Vagina (tissue), 2 donors: ENCODE measurements at regions of chr20 and their contacts with region 1.

Region 1: GRCh38 chr20:17682103-17682888 is at the start of gene RRBP1:
- DNase-seq: peak; percentile 98 to 99
- H3K4me3 ChIP-seq: peak within 1 kb of the TSS; percentile 73 to 96
- H3K27ac ChIP-seq: peak within 1 kb of the TSS; percentile 95
- H3K4me1 ChIP-seq: peaks cover 31% of the 10 kb centered on the region
- H3K27me3 ChIP-seq: no peaks in the 10 kb centered on the region
- CTCF ChIP-seq: peak; percentile 7 to 57 (median 30)
- POLR2A ChIP-seq: peak in 1 of 2 donors; percentile 92
- total RNA-seq, gene RRBP1: 79.8 TPM

Region 2: GRCh38 chr20:17536944-17537444 is 145.3 kb before region 1 on chr20:
- intact Hi-C with region 1: loop called (anchors 10 kb)
- DNase-seq: no peak
- H3K4me3 ChIP-seq: no peak overlapping the region
- H3K27ac ChIP-seq: no peak overlapping the region
- H3K4me1 ChIP-seq: peaks cover 15% of the 10 kb centered on the region
- H3K27me3 ChIP-seq: no peaks in the 10 kb centered on the region
- CTCF ChIP-seq: peak; percentile 52 to 98 (median 85)
- POLR2A ChIP-seq: no peak

Region 3: DNA sequence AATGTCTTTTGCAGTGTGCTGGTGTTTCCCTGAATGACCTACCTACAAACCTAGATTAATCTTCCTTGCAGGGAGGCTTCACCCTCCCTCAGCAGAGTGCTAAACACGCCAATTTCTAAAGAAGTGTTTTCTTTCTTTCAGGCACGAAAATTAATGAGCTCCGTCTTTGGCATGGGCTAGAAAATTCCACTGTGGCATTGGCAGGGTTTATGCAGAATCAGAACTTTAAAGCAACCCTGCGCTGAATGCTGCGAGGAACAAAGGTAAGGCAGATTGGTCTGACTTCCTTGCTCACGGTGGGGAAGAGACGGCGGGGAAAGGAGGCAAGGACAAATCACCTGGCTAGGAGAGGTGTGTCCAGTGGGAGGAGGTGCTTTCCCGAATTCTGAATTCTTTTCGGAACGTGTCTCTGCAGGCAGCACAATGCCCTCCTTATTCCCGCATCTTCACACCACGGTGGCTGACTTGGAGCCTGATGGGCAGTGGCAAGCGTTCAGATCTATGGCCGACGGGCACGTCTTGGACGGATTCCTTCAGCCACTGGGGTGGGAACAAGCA is 11.2 kb after region 1 on chr20:
- intact Hi-C with region 1: no loop called
- DNase-seq: no peak
- H3K4me3 ChIP-seq: no peak overlapping the region
- H3K27ac ChIP-seq: no peak overlapping the region
- H3K4me1 ChIP-seq: no peaks in the 10 kb centered on the region
- H3K27me3 ChIP-seq: no peaks in the 10 kb centered on the region
- CTCF ChIP-seq: no peak
- POLR2A ChIP-seq: no peak

Region 4: GRCh38 chr20:17796091-17796563 is 113.8 kb after region 1 on chr20:
- intact Hi-C with region 1: loop called (anchors 10 kb)
- DNase-seq: no peak
- H3K4me3 ChIP-seq: no peak overlapping the region
- H3K27ac ChIP-seq: peak overlapping the region; percentile 73
- H3K4me1 ChIP-seq: peaks cover 26% of the 10 kb centered on the region
- H3K27me3 ChIP-seq: no peaks in the 10 kb centered on the region
- CTCF ChIP-seq: no peak
- POLR2A ChIP-seq: no peak

Region 5: GRCh38 chr20:17898548-17898994 is 216.3 kb after region 1 on chr20:
- intact Hi-C with region 1: loop called (anchors 5 kb)
- DNase-seq: no peak
- H3K4me3 ChIP-seq: no peak overlapping the region
- H3K27ac ChIP-seq: no peak overlapping the region
- H3K4me1 ChIP-seq: peaks cover 5% of the 10 kb centered on the region
- H3K27me3 ChIP-seq: no peaks in the 10 kb centered on the region
- CTCF ChIP-seq: peak; percentile 43 to 96 (median 90)
- POLR2A ChIP-seq: no peak

Region 6: GRCh38 chr20:17968366-17969279 is 286.3 kb after region 1 on chr20 and contains the starts of genes MGME1 and SNX5:
- intact Hi-C with region 1: loop called (anchors 5 kb)
- DNase-seq: peak; percentile 97 to 99
- H3K4me3 ChIP-seq: peak within 1 kb of the TSS; percentile 75 to 91
- H3K27ac ChIP-seq: peak within 1 kb of the TSS; percentile 92
- H3K4me1 ChIP-seq: peaks cover 77% of the 10 kb centered on the region
- H3K27me3 ChIP-seq: no peaks in the 10 kb centered on the region
- CTCF ChIP-seq: no peak
- POLR2A ChIP-seq: peak in 1 of 2 donors; percentile 43
- total RNA-seq, gene MGME1: 8.6 TPM
- total RNA-seq, gene SNX5: 159 TPM

Region 7: DNA sequence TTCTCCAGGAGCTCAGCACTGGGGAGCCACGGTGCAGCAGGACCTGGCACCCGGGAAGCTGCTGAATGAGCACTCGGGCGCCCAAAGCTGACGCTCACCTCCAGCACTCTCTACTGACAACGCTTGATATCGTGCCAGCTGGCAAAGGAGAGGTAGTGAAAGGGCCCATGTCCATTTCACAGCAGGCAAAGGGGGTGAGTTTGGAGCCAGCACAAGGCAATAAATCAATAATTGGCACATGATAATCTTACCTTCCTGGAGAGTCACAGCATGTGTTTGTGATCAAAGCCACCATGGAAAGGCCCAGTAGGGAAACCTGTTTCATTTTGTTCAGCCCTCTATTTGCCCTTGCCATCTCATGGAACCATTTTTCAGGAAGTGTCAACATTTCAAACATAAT is 861.6 kb after region 1 on chr20:
- intact Hi-C with region 1: no loop called
- DNase-seq: no peak
- H3K4me3 ChIP-seq: no peak overlapping the region
- H3K27ac ChIP-seq: no peak overlapping the region
- H3K4me1 ChIP-seq: no peaks in the 10 kb centered on the region
- H3K27me3 ChIP-seq: no peaks in the 10 kb centered on the region
- CTCF ChIP-seq: no peak
- POLR2A ChIP-seq: no peak